B cell (primary cell): ENCODE measurements at regions of chr19 and their contacts with region 1.

Region 1: GRCh38 chr19:35648017-35648961 is at the start of gene COX6B1:
- DNase-seq: peak; percentile 96
- ATAC-seq: peak; percentile 65
- H3K4me3 ChIP-seq: peak within 1 kb of the TSS; percentile 69 to 88 (median 85)
- H3K4me3 Mint-ChIP-seq: peak within 1 kb of the TSS; percentile 94
- H3K27ac ChIP-seq: peak within 1 kb of the TSS; percentile 64 to 80
- H3K27ac Mint-ChIP-seq: peak within 1 kb of the TSS; percentile 87
- H3K4me1 ChIP-seq: peaks cover 14 to 43% of the 10 kb centered on the region in 2 donors
- H3K4me1 Mint-ChIP-seq: peaks cover 44% of the 10 kb centered on the region
- H3K27me3 ChIP-seq: no peaks in the 10 kb centered on the region
- H3K27me3 Mint-ChIP-seq: no peaks in the 10 kb centered on the region
- CTCF ChIP-seq: no peak
- total RNA-seq, gene COX6B1: 214 and 215 TPM in 2 replicates

Region 2: GRCh38 chr19:35545001-35545911 is 103.0 kb before region 1 on chr19 and contains the start of gene TMEM147:
- CTCF ChIA-PET with region 1: interaction called, 3 read pairs
- POLR2A ChIA-PET with region 1: no interaction called
- intact Hi-C with region 1: loop called (anchors 1 kb)
- DNase-seq: peak; percentile 87
- ATAC-seq: peak; percentile 92
- H3K4me3 ChIP-seq: peak within 1 kb of the TSS; percentile 45 to 97 (median 86)
- H3K4me3 Mint-ChIP-seq: peak within 1 kb of the TSS; percentile 91
- H3K27ac ChIP-seq: peak within 1 kb of the TSS; percentile 87 to 92
- H3K27ac Mint-ChIP-seq: peak within 1 kb of the TSS; percentile 89
- H3K4me1 ChIP-seq: peaks cover 16 to 34% of the 10 kb centered on the region in 2 donors
- H3K4me1 Mint-ChIP-seq: peaks cover 37% of the 10 kb centered on the region
- H3K27me3 ChIP-seq: no peaks in the 10 kb centered on the region
- H3K27me3 Mint-ChIP-seq: no peaks in the 10 kb centered on the region
- CTCF ChIP-seq: no peak
- total RNA-seq, gene TMEM147: 39.8 and 41.6 TPM in 2 replicates

Region 3: DNA sequence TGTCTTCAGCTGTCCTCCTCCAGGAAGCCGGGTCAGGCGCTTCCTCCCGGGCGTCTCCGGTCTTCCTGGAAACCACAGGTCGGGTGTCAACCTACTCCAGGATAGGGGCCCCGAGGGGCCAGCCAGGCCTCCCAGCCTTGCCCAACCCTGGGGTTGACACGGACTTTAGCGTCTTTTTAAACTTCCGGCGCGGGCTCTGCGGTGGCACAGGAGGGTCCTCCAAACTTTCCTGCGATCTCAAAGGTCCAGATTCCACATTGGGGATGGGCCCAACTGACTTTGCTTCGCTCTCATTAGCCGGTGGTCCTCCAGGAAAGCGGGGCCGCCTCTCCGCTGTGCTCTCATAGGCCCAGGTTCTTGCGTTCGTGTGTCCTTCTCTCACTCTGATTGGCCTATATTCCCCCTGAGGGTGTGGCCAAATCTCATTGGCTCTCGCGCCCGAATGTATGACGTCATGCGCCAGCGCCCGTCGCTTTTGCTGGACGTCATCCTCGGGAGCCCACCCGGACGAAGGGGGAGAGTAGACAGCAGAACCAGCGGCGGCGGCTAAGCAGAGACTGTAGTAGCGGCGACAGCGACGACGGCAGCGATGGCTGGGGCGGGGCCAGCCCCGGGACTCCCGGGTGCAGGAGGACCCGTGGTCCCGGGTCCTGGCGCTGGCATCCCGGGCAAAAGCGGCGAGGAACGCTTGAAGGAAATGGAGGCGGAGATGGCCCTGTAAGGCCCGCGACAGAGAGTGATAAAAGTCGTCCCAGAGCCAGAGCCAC is 19.5 kb before region 1 on chr19 and contains the start of gene RBM42:
- CTCF ChIA-PET with region 1: no interaction called
- POLR2A ChIA-PET with region 1: interaction called, 3 read pairs
- intact Hi-C with region 1: loop called (anchors 1 kb)
- DNase-seq: peak; percentile 98
- ATAC-seq: peak; percentile 99
- H3K4me3 ChIP-seq: peak within 1 kb of the TSS; percentile 81 to 98 (median 85)
- H3K4me3 Mint-ChIP-seq: peak within 1 kb of the TSS; percentile 99
- H3K27ac ChIP-seq: peak within 1 kb of the TSS; percentile 80 to 89
- H3K27ac Mint-ChIP-seq: peak within 1 kb of the TSS; percentile 99
- H3K4me1 ChIP-seq: peaks cover 8 to 17% of the 10 kb centered on the region in 2 donors
- H3K4me1 Mint-ChIP-seq: peaks cover 25% of the 10 kb centered on the region
- H3K27me3 ChIP-seq: no peaks in the 10 kb centered on the region
- H3K27me3 Mint-ChIP-seq: no peaks in the 10 kb centered on the region
- CTCF ChIP-seq: no peak
- total RNA-seq, gene RBM42: 52.0 and 52.7 TPM in 2 replicates

Region 4: GRCh38 chr19:35740423-35741202 is 92.3 kb after region 1 on chr19:
- CTCF ChIA-PET with region 1: no interaction called
- POLR2A ChIA-PET with region 1: interaction called, 7 read pairs
- intact Hi-C with region 1: loop called (anchors 2 kb)
- DNase-seq: peak; percentile 95
- ATAC-seq: peak; percentile 64
- H3K4me3 ChIP-seq: peak overlapping the region; percentile 60 to 93 (median 83)
- H3K4me3 Mint-ChIP-seq: peak overlapping the region; percentile 96
- H3K27ac ChIP-seq: peak overlapping the region; percentile 59 to 73
- H3K27ac Mint-ChIP-seq: peak overlapping the region; percentile 92
- H3K4me1 ChIP-seq: peaks cover 34 to 64% of the 10 kb centered on the region in 2 donors
- H3K4me1 Mint-ChIP-seq: peaks cover 57% of the 10 kb centered on the region
- H3K27me3 ChIP-seq: no peaks in the 10 kb centered on the region
- H3K27me3 Mint-ChIP-seq: no peaks in the 10 kb centered on the region
- CTCF ChIP-seq: no peak

Region 5: GRCh38 chr19:35775298-35776110 is 127.2 kb after region 1 on chr19 and contains the start of gene ARHGAP33:
- CTCF ChIA-PET with region 1: no interaction called
- POLR2A ChIA-PET with region 1: no interaction called
- intact Hi-C with region 1: loop called (anchors 1 kb)
- DNase-seq: peak; percentile 99
- ATAC-seq: peak; percentile 99
- H3K4me3 ChIP-seq: peak within 1 kb of the TSS; percentile 26 to 68 (median 58)
- H3K4me3 Mint-ChIP-seq: peak within 1 kb of the TSS; percentile 86
- H3K27ac ChIP-seq: peak within 1 kb of the TSS in 1 of 2 donors; percentile 19
- H3K27ac Mint-ChIP-seq: peak within 1 kb of the TSS; percentile 43
- H3K4me1 ChIP-seq: peaks cover 10 to 16% of the 10 kb centered on the region in 2 donors
- H3K4me1 Mint-ChIP-seq: peaks cover 10% of the 10 kb centered on the region
- H3K27me3 ChIP-seq: no peaks in the 10 kb centered on the region
- H3K27me3 Mint-ChIP-seq: no peaks in the 10 kb centered on the region
- CTCF ChIP-seq: no peak
- total RNA-seq, gene ARHGAP33: 18.2 and 21.6 TPM in 2 replicates

Region 6: GRCh38 chr19:37594304-37594981 is 1946.2 kb after region 1 on chr19 and contains the starts of genes ZNF540 and ZNF571:
- CTCF ChIA-PET with region 1: no interaction called
- POLR2A ChIA-PET with region 1: no interaction called
- intact Hi-C with region 1: loop called (anchors 10 kb)
- DNase-seq: peak; percentile 95
- ATAC-seq: peak; percentile 96
- H3K4me3 ChIP-seq: peak within 1 kb of the TSS; percentile 67 to 88 (median 87)
- H3K4me3 Mint-ChIP-seq: peak within 1 kb of the TSS; percentile 99
- H3K27ac ChIP-seq: peak within 1 kb of the TSS; percentile 93 to 96
- H3K27ac Mint-ChIP-seq: peak within 1 kb of the TSS; percentile 99
- H3K4me1 ChIP-seq: peaks cover 11 to 14% of the 10 kb centered on the region in 2 donors
- H3K4me1 Mint-ChIP-seq: peaks cover 25% of the 10 kb centered on the region
- H3K27me3 ChIP-seq: no peaks in the 10 kb centered on the region
- H3K27me3 Mint-ChIP-seq: no peaks in the 10 kb centered on the region
- CTCF ChIP-seq: no peak
- total RNA-seq, gene ZNF540: 10.7 and 10.8 TPM in 2 replicates
- total RNA-seq, gene ZNF571: 10.0 and 13.1 TPM in 2 replicates